ENCODE measurements at regions of chr2 and their contacts with region 1.

Region 1: GRCh38 chr2:54106631-54107454 is 8.6 kb upstream of the ACYP2 start:
- DNase-seq: peak in 1 of 2 donors; percentile 76
- ATAC-seq: peak; percentile 68 to 83 (median 80)
- H3K4me3 ChIP-seq: no peak overlapping the region
- H3K4me3 Mint-ChIP-seq: no peak overlapping the region
- H3K27ac ChIP-seq: no peak overlapping the region
- H3K27ac Mint-ChIP-seq: no peak overlapping the region
- H3K4me1 ChIP-seq: no peaks in the 10 kb centered on the region
- H3K4me1 Mint-ChIP-seq: peaks cover 5 to 7% of the 10 kb centered on the region in 2 donors
- H3K27me3 ChIP-seq: no peaks in the 10 kb centered on the region
- H3K27me3 Mint-ChIP-seq: peaks cover 4 to 10% of the 10 kb centered on the region in 2 donors
- CTCF ChIP-seq: peak; percentile 61

Region 2: DNA sequence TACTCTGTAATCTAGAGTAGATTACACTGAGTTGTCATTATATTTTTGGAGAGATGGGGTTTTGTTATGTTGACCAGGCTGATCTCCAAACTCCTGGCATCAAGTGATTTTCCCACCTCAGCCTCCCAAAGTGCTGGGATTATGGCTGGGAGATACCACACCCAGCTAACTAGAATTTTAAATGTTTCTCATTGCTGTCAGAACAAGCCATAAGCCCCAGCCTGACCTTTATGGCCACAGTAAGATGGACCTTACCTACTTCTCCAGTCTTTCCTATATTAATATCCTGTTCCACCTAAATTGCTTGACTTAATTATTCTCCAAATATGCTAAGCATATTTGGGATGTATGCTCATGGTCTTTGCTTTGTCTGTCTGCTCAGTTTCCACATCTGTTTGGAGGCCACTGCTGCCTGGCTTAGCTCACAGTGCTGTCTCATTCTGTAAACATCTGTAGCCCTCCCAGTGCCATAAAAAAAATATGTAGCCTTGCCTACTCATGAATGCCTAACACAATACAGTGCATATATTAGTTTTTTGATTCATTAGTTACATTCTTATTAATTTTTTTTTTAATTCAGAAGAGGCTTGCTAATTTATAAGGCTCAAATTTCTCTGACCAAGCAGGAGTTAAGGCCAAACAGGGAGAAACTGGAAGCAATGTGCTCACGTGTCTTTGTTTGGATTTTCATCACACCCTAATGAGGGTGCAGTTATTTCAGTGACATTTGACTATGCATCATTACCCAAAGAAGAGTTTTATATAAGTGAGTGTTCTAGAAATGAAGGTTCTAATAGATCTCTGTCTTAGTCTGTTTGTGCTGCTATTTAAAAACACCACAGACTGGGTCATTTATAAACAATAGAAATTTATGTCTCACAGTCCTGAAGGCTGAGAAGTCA is 90.8 kb before region 1 on chr2:
- intact Hi-C with region 1: no loop called
- DNase-seq: no peak
- ATAC-seq: no peak
- H3K4me3 ChIP-seq: no peak overlapping the region
- H3K4me3 Mint-ChIP-seq: no peak overlapping the region
- H3K27ac ChIP-seq: no peak overlapping the region
- H3K27ac Mint-ChIP-seq: peak overlapping the region in 1 of 2 donors; percentile 77
- H3K4me1 ChIP-seq: peaks cover 19% of the 10 kb centered on the region
- H3K4me1 Mint-ChIP-seq: peaks cover 24 to 29% of the 10 kb centered on the region in 2 donors
- H3K27me3 ChIP-seq: no peaks in the 10 kb centered on the region
- H3K27me3 Mint-ChIP-seq: no peaks in the 10 kb centered on the region
- CTCF ChIP-seq: no peak

Region 3: GRCh38 chr2:54133056-54133455 is 26.2 kb after region 1 on chr2:
- intact Hi-C with region 1: no loop called
- DNase-seq: no peak
- ATAC-seq: no peak
- H3K4me3 ChIP-seq: no peak overlapping the region
- H3K4me3 Mint-ChIP-seq: no peak overlapping the region
- H3K27ac ChIP-seq: no peak overlapping the region
- H3K27ac Mint-ChIP-seq: no peak overlapping the region
- H3K4me1 ChIP-seq: no peaks in the 10 kb centered on the region
- H3K4me1 Mint-ChIP-seq: no peaks in the 10 kb centered on the region
- H3K27me3 ChIP-seq: no peaks in the 10 kb centered on the region
- H3K27me3 Mint-ChIP-seq: no peaks in the 10 kb centered on the region
- CTCF ChIP-seq: no peak

Region 4: GRCh38 chr2:54149638-54150441 is 43.0 kb after region 1 on chr2:
- intact Hi-C with region 1: no loop called
- DNase-seq: no peak
- ATAC-seq: no peak
- H3K4me3 ChIP-seq: no peak overlapping the region
- H3K4me3 Mint-ChIP-seq: no peak overlapping the region
- H3K27ac ChIP-seq: no peak overlapping the region
- H3K27ac Mint-ChIP-seq: no peak overlapping the region
- H3K4me1 ChIP-seq: no peaks in the 10 kb centered on the region
- H3K4me1 Mint-ChIP-seq: no peaks in the 10 kb centered on the region
- H3K27me3 ChIP-seq: no peaks in the 10 kb centered on the region
- H3K27me3 Mint-ChIP-seq: no peaks in the 10 kb centered on the region
- CTCF ChIP-seq: no peak

Region 5: DNA sequence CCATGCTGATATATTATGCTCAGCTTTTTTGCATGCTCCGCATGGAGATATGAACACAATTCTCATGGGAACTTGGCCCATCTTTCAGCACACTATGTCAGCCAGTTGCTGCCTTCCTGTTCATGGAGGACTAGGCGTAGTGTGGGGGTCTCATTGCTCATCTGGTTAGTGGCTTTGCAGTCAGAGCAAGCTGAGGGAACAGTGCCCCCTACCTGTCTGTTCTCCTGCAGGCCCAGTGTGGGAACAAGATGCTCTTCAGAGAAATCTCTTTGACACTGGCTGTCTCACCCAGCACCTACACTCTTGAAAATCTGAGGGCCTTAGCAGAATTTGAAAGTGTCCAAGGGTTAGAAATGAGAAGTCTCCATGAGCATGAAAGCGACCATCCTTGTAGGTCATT is 396.3 kb after region 1 on chr2:
- intact Hi-C with region 1: loop called (anchors 1 kb)
- DNase-seq: peak in 1 of 2 donors; percentile 56
- ATAC-seq: peak in 1 of 3 donors; percentile 48
- H3K4me3 ChIP-seq: no peak overlapping the region
- H3K4me3 Mint-ChIP-seq: no peak overlapping the region
- H3K27ac ChIP-seq: no peak overlapping the region
- H3K27ac Mint-ChIP-seq: no peak overlapping the region
- H3K4me1 ChIP-seq: no peaks in the 10 kb centered on the region
- H3K4me1 Mint-ChIP-seq: no peaks in the 10 kb centered on the region
- H3K27me3 ChIP-seq: no peaks in the 10 kb centered on the region
- H3K27me3 Mint-ChIP-seq: peaks cover 0 to 6% of the 10 kb centered on the region in 2 donors
- CTCF ChIP-seq: peak; percentile 17

Region 6: GRCh38 chr2:54704688-54705605 is 598.1 kb after region 1 on chr2:
- intact Hi-C with region 1: loop called (anchors 1 kb)
- DNase-seq: peak in 1 of 2 donors; percentile 79
- ATAC-seq: peak; percentile 64 to 77 (median 73)
- H3K4me3 ChIP-seq: no peak overlapping the region
- H3K4me3 Mint-ChIP-seq: no peak overlapping the region
- H3K27ac ChIP-seq: no peak overlapping the region
- H3K27ac Mint-ChIP-seq: no peak overlapping the region
- H3K4me1 ChIP-seq: peaks cover 13% of the 10 kb centered on the region
- H3K4me1 Mint-ChIP-seq: peaks cover 0 to 5% of the 10 kb centered on the region in 2 donors
- H3K27me3 ChIP-seq: peaks cover 21% of the 10 kb centered on the region
- H3K27me3 Mint-ChIP-seq: peaks cover 15 to 38% of the 10 kb centered on the region in 2 donors
- CTCF ChIP-seq: peak; percentile 76